H1 (cell line): ENCODE measurements at regions of chr3 and their contacts with region 1.

Region 1: DNA sequence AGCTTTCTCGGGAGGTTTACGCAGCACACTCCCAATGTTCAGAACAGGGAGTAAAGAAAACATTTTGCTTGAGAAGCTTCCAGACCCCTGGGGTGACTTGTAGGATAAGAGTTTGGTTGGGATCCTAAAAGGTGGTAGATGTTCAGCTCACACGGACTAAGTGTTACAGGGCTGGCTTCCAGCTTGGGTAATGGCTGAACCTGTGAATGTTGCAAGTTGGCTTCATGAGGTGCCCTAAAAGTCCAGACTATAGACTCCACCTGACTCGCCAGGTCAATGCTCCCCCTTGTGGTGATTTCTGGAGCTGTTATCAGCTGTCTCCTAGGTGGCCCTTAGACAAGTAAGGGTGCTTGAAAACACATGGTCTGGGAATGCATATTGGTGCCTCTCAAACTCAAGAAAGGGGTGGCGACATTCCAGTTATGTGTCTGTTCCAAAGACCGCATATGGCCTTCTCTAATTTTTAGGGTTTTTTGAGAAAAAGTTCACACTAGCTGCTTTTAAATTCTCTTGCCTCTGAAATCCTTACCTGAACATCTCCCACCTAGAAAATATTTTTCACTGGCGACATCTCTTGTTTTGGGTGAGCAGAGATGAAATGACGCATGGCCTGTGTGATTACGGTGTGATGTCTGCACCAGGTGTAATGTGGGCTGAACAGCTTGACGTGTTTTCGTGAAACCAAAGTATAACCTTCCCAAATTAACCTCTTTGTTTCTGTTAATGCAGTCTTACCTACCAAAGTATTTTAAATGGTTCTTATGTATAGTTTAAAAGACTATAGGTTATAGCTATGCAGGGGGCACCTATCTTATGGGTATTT is 175.7 kb upstream of the KBTBD8 start:
- DNase-seq: peak; percentile 78 to 91
- H3K4me3 ChIP-seq: no peak overlapping the region
- H3K27ac ChIP-seq: no peak overlapping the region
- H3K4me1 ChIP-seq: peaks cover 0 to 7% (median 6%) of the 10 kb centered on the region in 4 experiments; a peak in 5 of 7 replicates
- H3K27me3 ChIP-seq: no peaks in the 10 kb centered on the region
- CTCF ChIP-seq: peak; percentile 70 to 94 (median 78)
- EP300 ChIP-seq: no peak
- POLR2A ChIP-seq: no peak
- RAD21 ChIP-seq: peak; percentile 80 to 87

Region 2: DNA sequence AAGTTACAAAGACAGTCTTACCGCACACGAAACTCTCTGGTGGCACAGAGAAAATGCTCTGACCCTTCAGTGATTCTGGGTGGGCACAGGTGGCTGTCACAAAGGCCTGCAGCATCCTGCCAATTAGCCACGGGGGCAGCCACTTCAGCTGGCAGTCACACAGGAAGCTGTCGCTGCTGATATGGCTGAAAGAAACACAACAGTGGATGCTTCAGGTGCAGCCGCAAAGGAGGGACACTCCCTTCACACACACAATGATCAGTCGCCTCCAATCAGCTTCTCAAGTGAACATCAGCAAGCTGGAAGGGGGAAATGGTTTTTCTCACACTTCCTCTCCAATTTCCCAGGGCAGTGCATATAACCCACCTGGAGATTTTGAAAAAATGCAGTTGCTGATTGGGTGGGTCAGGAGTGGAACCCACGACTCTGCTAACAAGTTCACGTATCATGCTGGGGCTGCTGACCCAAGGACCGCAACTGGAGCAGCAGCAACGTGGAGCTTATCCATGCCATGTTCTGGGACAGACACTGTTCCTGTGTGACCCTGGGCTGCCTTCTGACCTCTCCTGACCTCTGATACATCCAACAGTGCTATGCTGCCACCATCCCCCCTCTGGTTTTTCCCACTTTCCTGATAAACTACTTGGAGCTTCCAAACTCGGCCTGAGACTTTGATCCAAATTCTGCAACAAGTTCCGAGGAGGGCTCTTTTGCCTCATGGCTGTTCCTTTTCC is 428.2 kb before region 1 on chr3:
- CTCF ChIA-PET with region 1: interaction called, 11 read pairs
- POLR2A ChIA-PET with region 1: no interaction called
- DNase-seq: no peak
- H3K4me3 ChIP-seq: no peak overlapping the region
- H3K27ac ChIP-seq: no peak overlapping the region
- H3K4me1 ChIP-seq: no peaks in the 10 kb centered on the region; a peak in 1 of 7 replicates
- H3K27me3 ChIP-seq: no peaks in the 10 kb centered on the region
- CTCF ChIP-seq: no peak
- EP300 ChIP-seq: no peak
- POLR2A ChIP-seq: no peak; a peak in 1 of 3 replicates
- RAD21 ChIP-seq: no peak

Region 3: GRCh38 chr3:66603151-66603611 is 219.2 kb before region 1 on chr3:
- CTCF ChIA-PET with region 1: no interaction called
- POLR2A ChIA-PET with region 1: no interaction called
- DNase-seq: no peak
- H3K4me3 ChIP-seq: no peak overlapping the region
- H3K27ac ChIP-seq: no peak overlapping the region
- H3K4me1 ChIP-seq: peaks cover 0 to 9% (median 4%) of the 10 kb centered on the region in 4 experiments; a peak in 3 of 7 replicates
- H3K27me3 ChIP-seq: no peaks in the 10 kb centered on the region
- CTCF ChIP-seq: no peak
- EP300 ChIP-seq: no peak
- POLR2A ChIP-seq: no peak
- RAD21 ChIP-seq: no peak

Region 4: DNA sequence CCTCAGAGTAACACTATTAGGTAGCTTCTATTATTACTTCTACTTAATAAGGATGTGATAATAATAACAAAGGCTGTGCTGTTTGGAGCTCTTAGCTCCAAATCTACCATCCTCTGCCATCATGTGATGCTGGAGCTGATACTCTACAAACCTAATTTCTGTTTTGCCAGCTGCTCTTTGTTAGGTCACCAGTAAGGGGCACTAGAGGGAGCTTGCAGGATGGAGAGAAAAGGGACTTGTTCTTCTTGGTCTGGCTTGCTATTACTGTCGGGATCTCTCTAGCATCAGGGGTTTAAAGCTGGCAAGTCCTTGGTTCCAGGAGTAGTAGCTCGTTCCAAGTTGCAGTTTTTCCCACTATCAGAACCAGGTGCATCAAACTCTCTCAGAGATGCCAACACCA is 19.2 kb before region 1 on chr3:
- CTCF ChIA-PET with region 1: interaction called, 28 read pairs
- POLR2A ChIA-PET with region 1: no interaction called
- DNase-seq: no peak
- H3K4me3 ChIP-seq: no peak overlapping the region
- H3K27ac ChIP-seq: no peak overlapping the region
- H3K4me1 ChIP-seq: peaks cover 0 to 6% (median 3%) of the 10 kb centered on the region in 4 experiments; a peak in 4 of 7 replicates
- H3K27me3 ChIP-seq: no peaks in the 10 kb centered on the region
- CTCF ChIP-seq: peak in 2 of 3 experiments; percentile 72 to 86; a peak in 3 of 4 replicates
- EP300 ChIP-seq: no peak
- POLR2A ChIP-seq: no peak
- RAD21 ChIP-seq: peak; percentile 57 to 77

Region 5: DNA sequence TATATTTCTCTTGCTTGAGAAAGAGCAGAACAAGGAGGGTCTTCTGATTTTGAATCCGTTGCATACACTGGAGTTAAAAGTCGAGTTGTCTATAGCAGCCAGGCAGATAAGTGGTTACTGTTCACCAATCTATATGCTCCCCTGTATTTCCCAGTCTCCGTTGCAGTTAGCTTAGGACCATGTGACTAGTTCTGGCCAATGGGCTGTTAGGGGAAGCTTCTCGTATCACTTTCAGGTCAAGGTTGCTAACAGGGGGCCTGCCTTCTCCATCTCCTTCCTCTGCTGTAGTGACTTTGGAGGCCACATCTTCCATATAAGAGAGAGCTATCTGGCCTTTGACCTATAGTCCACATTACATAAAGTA is 12.8 kb before region 1 on chr3:
- CTCF ChIA-PET with region 1: interaction called, 28 read pairs
- POLR2A ChIA-PET with region 1: no interaction called
- DNase-seq: no peak
- H3K4me3 ChIP-seq: no peak overlapping the region
- H3K27ac ChIP-seq: no peak overlapping the region
- H3K4me1 ChIP-seq: peaks cover 0 to 3% (median 0%) of the 10 kb centered on the region in 4 experiments; a peak in 1 of 7 replicates
- H3K27me3 ChIP-seq: no peaks in the 10 kb centered on the region
- CTCF ChIP-seq: no peak
- EP300 ChIP-seq: no peak
- POLR2A ChIP-seq: no peak
- RAD21 ChIP-seq: no peak

Region 6: GRCh38 chr3:66856533-66856932 is 34.1 kb after region 1 on chr3:
- CTCF ChIA-PET with region 1: interaction called, 10 read pairs
- POLR2A ChIA-PET with region 1: no interaction called
- DNase-seq: no peak
- H3K4me3 ChIP-seq: no peak overlapping the region
- H3K27ac ChIP-seq: no peak overlapping the region
- H3K4me1 ChIP-seq: peaks cover 0 to 4% (median under 1%) of the 10 kb centered on the region in 4 experiments; a peak in 2 of 7 replicates
- H3K27me3 ChIP-seq: no peaks in the 10 kb centered on the region; a peak in 1 of 7 replicates
- CTCF ChIP-seq: no peak
- EP300 ChIP-seq: no peak
- POLR2A ChIP-seq: no peak
- RAD21 ChIP-seq: no peak